ENCODE measurements at regions of chr7 and their contacts with region 1.

Region 1: GRCh38 chr7:134514663-134515062 is 12.7 kb upstream of the AKR1B10 start:
- DNase-seq: no peak
- ATAC-seq: peak; percentile 77
- H3K4me3 ChIP-seq: no peak overlapping the region
- H3K27ac ChIP-seq: no peak overlapping the region
- H3K4me1 ChIP-seq: peaks cover 5 to 6% of the 10 kb centered on the region in 2 donors
- H3K27me3 ChIP-seq: no peaks in the 10 kb centered on the region

Region 2: GRCh38 chr7:134432296-134433152 is 82.1 kb before region 1 on chr7:
- intact Hi-C with region 1: loop called (anchors 1 to 2 kb)
- DNase-seq: peak; percentile 90 to 95
- ATAC-seq: peak; percentile 96
- H3K4me3 ChIP-seq: no peak overlapping the region
- H3K27ac ChIP-seq: peak overlapping the region in 1 of 2 donors; percentile 21
- H3K4me1 ChIP-seq: no peaks in the 10 kb centered on the region
- H3K27me3 ChIP-seq: no peaks in the 10 kb centered on the region

Region 3: GRCh38 chr7:134547397-134548054 is 32.9 kb after region 1 on chr7:
- intact Hi-C with region 1: loop called in 1 of 2 experiments (anchors 2 kb)
- DNase-seq: peak; percentile 81 to 91
- ATAC-seq: peak; percentile 83
- H3K4me3 ChIP-seq: peak overlapping the region; percentile 31 to 36
- H3K27ac ChIP-seq: no peak overlapping the region
- H3K4me1 ChIP-seq: no peaks in the 10 kb centered on the region
- H3K27me3 ChIP-seq: no peaks in the 10 kb centered on the region

Region 4: DNA sequence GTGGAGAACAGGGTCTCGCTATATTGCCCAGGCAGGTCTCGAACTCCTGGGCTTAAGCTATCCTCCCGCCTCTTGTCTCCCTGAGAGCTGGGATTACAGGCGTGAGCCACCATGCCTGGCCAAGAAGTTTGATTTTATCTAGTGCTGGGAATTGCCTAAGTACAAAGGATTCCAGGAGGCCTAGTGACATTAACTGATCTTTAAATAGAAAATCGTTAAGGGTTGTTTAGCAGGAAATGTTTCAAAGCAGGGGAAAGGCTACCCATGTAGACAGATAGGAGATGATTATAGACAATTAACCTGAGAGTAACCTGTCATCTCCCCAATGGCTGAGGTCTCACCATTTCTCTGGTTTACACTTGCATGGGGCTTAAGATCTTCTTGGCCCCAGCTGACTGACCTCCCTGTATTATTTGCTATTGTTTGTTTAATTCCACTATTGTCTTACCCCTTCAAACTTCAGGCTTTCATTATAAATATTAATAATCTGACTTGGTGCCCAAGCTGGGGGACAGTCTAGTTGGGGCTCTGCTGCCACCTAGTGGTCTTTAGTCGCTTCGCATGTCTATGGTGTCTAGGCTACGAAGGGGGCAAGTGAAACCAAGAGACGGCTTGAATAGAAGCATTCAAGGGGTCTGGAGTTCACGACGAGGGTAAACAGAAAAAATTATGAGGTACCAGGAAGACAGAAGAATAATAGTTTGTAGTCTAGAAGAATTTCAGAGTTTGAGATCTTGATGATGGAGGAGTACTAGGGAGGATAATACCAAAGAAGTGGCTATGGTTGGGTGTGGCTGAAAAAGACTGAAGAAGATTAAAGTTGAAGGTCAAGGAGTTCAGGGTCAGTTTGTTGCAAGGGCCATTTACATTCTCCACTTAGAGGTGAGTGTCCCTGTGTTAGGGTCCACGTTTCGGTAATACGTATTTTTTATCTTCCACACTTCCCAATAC is 91.6 kb after region 1 on chr7:
- intact Hi-C with region 1: loop called (anchors 2 to 5 kb)
- DNase-seq: peak in 1 of 2 donors; percentile 67
- ATAC-seq: peak; percentile 93
- H3K4me3 ChIP-seq: no peak overlapping the region
- H3K27ac ChIP-seq: no peak overlapping the region
- H3K4me1 ChIP-seq: no peaks in the 10 kb centered on the region
- H3K27me3 ChIP-seq: no peaks in the 10 kb centered on the region

Measured in aorta (tissue), 5 donors.